ENCODE measurements at regions of chr11 and their contacts with region 1.

Region 1: DNA sequence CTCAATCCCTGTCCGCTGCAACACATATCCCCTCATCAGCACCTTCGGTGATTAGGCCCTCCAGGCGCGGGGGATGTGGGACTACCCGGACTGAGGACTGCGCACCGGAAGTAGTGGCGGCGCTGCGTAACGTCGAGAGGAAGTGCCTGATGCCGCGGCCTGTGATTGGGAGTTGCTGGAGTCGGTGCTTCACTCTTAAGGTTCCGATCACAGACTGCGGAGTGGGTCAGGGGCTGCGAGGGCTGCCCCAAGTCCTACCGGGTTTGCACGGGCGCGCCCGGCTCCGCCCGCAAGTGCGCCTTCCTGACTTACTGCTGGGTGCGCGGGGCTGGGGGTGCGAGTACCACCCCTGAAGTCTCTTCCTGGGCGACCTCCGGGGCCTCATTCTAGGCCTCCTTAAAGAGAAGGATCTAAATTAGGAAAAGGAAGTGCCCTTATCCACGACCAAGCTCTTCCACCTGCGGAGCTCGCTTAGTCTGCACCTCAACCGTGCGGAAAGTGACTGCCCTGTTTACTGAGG is at the start of gene ALKBH3:
- DNase-seq: peak; percentile 78 to 92 (median 90)
- ATAC-seq: peak; percentile 100
- H3K4me3 ChIP-seq: peak within 1 kb of the TSS; percentile 90
- H3K4me3 Mint-ChIP-seq: peak within 1 kb of the TSS; percentile 87 to 96 (median 90)
- H3K27ac ChIP-seq: peak within 1 kb of the TSS; percentile 80
- H3K27ac Mint-ChIP-seq: peak within 1 kb of the TSS; percentile 82 to 97 (median 88)
- H3K4me1 ChIP-seq: peaks cover 16 to 19% of the 10 kb centered on the region in 2 donors
- H3K4me1 Mint-ChIP-seq: peaks cover 12 to 47% (median 36%) of the 10 kb centered on the region in 7 donors
- H3K27me3 ChIP-seq: no peaks in the 10 kb centered on the region
- H3K27me3 Mint-ChIP-seq: peaks cover 0 to 22% (median 13%) of the 10 kb centered on the region in 5 donors
- total RNA-seq, gene ALKBH3: 28.9 to 32.8 (median 30.2) TPM

Region 2: DNA sequence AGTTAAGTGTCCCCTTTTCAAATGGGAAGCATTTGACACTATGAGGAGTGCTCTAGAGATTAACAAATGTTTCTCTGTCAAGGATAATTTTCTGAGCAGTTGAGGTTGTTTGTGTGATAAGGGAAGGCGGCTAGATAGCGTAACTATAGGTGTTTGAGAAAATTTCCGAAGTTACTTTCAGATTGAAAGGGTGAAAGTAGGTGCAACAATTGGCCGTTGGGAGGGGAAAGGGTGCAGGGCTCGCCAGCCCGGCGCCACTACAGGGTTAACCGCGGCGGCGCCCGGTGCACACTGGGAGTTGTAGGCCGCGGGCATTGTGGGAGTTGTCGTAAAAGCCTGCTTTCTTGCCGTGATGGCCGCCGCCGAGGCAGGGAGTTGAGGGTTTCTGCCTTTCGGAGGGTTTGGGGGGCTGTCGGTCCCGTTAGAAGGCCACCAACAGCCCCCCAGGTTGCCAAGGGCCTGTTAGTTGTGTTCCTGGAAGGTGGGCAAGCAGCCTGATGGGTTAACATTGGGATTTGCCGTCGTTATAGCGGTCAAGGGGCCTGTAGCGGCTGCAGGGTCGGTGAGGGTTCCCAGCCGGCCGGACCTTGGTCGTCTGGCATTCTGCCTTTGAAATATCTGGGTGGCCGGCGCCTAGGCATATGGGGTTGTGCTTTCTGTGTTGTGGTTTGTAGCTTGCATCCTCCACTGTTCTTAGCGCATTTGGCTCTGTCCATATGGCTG is 236.6 kb before region 1 on chr11:
- CTCF ChIA-PET with region 1: no interaction called
- POLR2A ChIA-PET with region 1: no interaction called
- intact Hi-C with region 1: loop called (anchors 1 to 2 kb)
- DNase-seq: peak; percentile 70 to 89 (median 86)
- ATAC-seq: peak; percentile 100
- H3K4me3 ChIP-seq: peak overlapping the region; percentile 95
- H3K4me3 Mint-ChIP-seq: peak overlapping the region; percentile 87 to 98 (median 94)
- H3K27ac ChIP-seq: peak overlapping the region; percentile 85
- H3K27ac Mint-ChIP-seq: peak overlapping the region; percentile 51 to 95 (median 90)
- H3K4me1 ChIP-seq: peaks cover 7 to 10% of the 10 kb centered on the region in 2 donors
- H3K4me1 Mint-ChIP-seq: peaks cover 7 to 31% (median 23%) of the 10 kb centered on the region in 7 donors
- H3K27me3 ChIP-seq: no peaks in the 10 kb centered on the region
- H3K27me3 Mint-ChIP-seq: peaks cover 12 to 18% (median 17%) of the 10 kb centered on the region in 5 donors

Region 3: GRCh38 chr11:43680521-43681400 is 199.9 kb before region 1 on chr11 and contains the start of gene HSD17B12:
- CTCF ChIA-PET with region 1: no interaction called
- POLR2A ChIA-PET with region 1: interaction called, 5 read pairs
- intact Hi-C with region 1: loop called (anchors 1 kb)
- DNase-seq: peak; percentile 91 to 100 (median 99)
- ATAC-seq: peak; percentile 99
- H3K4me3 ChIP-seq: peak within 1 kb of the TSS; percentile 81
- H3K4me3 Mint-ChIP-seq: peak within 1 kb of the TSS; percentile 85 to 99 (median 96)
- H3K27ac ChIP-seq: peak within 1 kb of the TSS; percentile 89
- H3K27ac Mint-ChIP-seq: peak within 1 kb of the TSS; percentile 84 to 98 (median 97)
- H3K4me1 ChIP-seq: peaks cover 4 to 8% of the 10 kb centered on the region in 2 donors
- H3K4me1 Mint-ChIP-seq: peaks cover 11 to 59% (median 43%) of the 10 kb centered on the region in 7 donors
- H3K27me3 ChIP-seq: no peaks in the 10 kb centered on the region
- H3K27me3 Mint-ChIP-seq: peaks cover 0 to 14% (median 2%) of the 10 kb centered on the region in 5 donors
- total RNA-seq, gene HSD17B12: 21.1 to 39.5 (median 24.7) TPM

Region 4: GRCh38 chr11:43830928-43831440 is 49.7 kb before region 1 on chr11:
- CTCF ChIA-PET with region 1: no interaction called
- POLR2A ChIA-PET with region 1: no interaction called
- intact Hi-C with region 1: no loop called
- DNase-seq: peak in 1 of 9 donors; percentile 48
- ATAC-seq: peak; percentile 66
- H3K4me3 ChIP-seq: no peak overlapping the region
- H3K4me3 Mint-ChIP-seq: peak overlapping the region in 1 of 10 donors; percentile 8
- H3K27ac ChIP-seq: no peak overlapping the region
- H3K27ac Mint-ChIP-seq: peak overlapping the region in 3 of 9 donors; percentile 43 to 71 (median 63)
- H3K4me1 ChIP-seq: no peaks in the 10 kb centered on the region
- H3K4me1 Mint-ChIP-seq: peaks cover 0 to 11% (median 0%) of the 10 kb centered on the region in 7 donors
- H3K27me3 ChIP-seq: no peaks in the 10 kb centered on the region
- H3K27me3 Mint-ChIP-seq: no peaks in the 10 kb centered on the region

Region 5: DNA sequence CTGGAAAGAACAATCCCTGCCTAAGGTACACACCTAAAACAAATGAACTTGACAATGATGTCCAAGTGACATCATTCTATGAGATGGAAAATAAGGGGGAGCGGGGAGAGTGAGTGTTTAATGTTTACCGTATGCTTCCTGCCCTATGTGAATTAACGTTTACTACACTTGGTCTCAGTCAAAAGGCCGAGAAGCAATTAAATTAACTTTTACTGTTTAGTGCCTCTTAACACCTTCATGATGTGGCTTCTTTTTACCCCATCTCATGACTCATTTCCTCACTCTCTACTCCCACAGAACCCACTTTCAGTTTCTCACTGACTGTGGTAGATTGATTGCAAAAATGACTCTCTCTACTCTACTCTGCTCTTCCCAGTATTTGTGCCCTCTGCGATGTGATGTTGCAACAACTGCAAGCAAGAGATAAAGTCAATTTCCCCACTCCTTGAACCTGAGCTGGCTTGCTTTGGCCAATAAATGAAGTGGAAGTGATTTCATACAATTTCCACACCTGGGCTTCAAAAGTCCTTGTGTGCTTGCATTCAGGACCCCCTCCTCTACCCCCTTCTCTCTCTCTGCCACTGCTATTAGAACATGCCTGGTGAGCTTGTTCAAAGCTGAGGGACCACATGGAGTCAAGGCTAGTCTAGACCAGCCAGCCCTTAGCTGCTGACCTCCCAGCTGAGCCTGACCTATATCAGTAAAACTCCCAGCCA is 11.7 kb before region 1 on chr11:
- CTCF ChIA-PET with region 1: no interaction called
- POLR2A ChIA-PET with region 1: no interaction called
- intact Hi-C with region 1: loop called (anchors 1 kb)
- DNase-seq: peak in 4 of 9 donors; percentile 8 to 58 (median 12)
- ATAC-seq: peak; percentile 99
- H3K4me3 ChIP-seq: peak overlapping the region; percentile 12
- H3K4me3 Mint-ChIP-seq: peak overlapping the region; percentile 2 to 65 (median 58)
- H3K27ac ChIP-seq: no peak overlapping the region
- H3K27ac Mint-ChIP-seq: peak overlapping the region in 5 of 9 donors; percentile 28 to 82 (median 62)
- H3K4me1 ChIP-seq: peaks cover 8 to 17% of the 10 kb centered on the region in 2 donors
- H3K4me1 Mint-ChIP-seq: peaks cover 8 to 27% (median 11%) of the 10 kb centered on the region in 7 donors
- H3K27me3 ChIP-seq: no peaks in the 10 kb centered on the region
- H3K27me3 Mint-ChIP-seq: peaks cover 21 to 68% (median 24%) of the 10 kb centered on the region in 5 donors

Region 6: GRCh38 chr11:45354976-45355705 is 1474.4 kb after region 1 on chr11:
- CTCF ChIA-PET with region 1: no interaction called
- POLR2A ChIA-PET with region 1: no interaction called
- intact Hi-C with region 1: loop called in 1 of 2 experiments (anchors 2 kb)
- DNase-seq: peak; percentile 77 to 91 (median 88)
- ATAC-seq: peak; percentile 96
- H3K4me3 ChIP-seq: peak overlapping the region; percentile 93
- H3K4me3 Mint-ChIP-seq: peak overlapping the region; percentile 75 to 87 (median 82)
- H3K27ac ChIP-seq: peak overlapping the region; percentile 73
- H3K27ac Mint-ChIP-seq: peak overlapping the region; percentile 70 to 91 (median 83)
- H3K4me1 ChIP-seq: peaks cover 0 to 5% of the 10 kb centered on the region in 2 donors
- H3K4me1 Mint-ChIP-seq: peaks cover 9 to 31% (median 26%) of the 10 kb centered on the region in 7 donors
- H3K27me3 ChIP-seq: no peaks in the 10 kb centered on the region
- H3K27me3 Mint-ChIP-seq: peaks cover 0 to 28% (median 7%) of the 10 kb centered on the region in 5 donors